Activated T-helper 1 cell treated with anti-CD3 and anti-CD28 coated beads, Interleukin-12 subunit alpha, Interleukin-12 subunit beta, Interleukin-2, Interleukin-4 antibody, amounts not matched to agents 30 ng/mL and 10 ng/mL and 1 ng/mL, durations not matched to agents 14 hours and 24 hours and 36 hours (primary cell): ENCODE measurements at regions of chr9 and their contacts with region 1.

Region 1: GRCh38 chr9:8750639-8751051 is 951.1 kb upstream of the DMAC1 start:
- DNase-seq: no peak
- H3K4me3 Mint-ChIP-seq: no peak overlapping the region
- H3K27ac Mint-ChIP-seq: no peak overlapping the region
- H3K4me1 Mint-ChIP-seq: no peaks in the 10 kb centered on the region
- H3K27me3 Mint-ChIP-seq: no peaks in the 10 kb centered on the region

Region 2: GRCh38 chr9:10479172-10479571 is 1728.5 kb after region 1 on chr9:
- intact Hi-C with region 1: loop called (anchors 10 kb)
- DNase-seq: no peak
- H3K4me3 Mint-ChIP-seq: no peak overlapping the region
- H3K27ac Mint-ChIP-seq: no peak overlapping the region
- H3K4me1 Mint-ChIP-seq: no peaks in the 10 kb centered on the region
- H3K27me3 Mint-ChIP-seq: no peaks in the 10 kb centered on the region